ENCODE measurements at regions of chr11 and their contacts with region 1.

Region 1: DNA sequence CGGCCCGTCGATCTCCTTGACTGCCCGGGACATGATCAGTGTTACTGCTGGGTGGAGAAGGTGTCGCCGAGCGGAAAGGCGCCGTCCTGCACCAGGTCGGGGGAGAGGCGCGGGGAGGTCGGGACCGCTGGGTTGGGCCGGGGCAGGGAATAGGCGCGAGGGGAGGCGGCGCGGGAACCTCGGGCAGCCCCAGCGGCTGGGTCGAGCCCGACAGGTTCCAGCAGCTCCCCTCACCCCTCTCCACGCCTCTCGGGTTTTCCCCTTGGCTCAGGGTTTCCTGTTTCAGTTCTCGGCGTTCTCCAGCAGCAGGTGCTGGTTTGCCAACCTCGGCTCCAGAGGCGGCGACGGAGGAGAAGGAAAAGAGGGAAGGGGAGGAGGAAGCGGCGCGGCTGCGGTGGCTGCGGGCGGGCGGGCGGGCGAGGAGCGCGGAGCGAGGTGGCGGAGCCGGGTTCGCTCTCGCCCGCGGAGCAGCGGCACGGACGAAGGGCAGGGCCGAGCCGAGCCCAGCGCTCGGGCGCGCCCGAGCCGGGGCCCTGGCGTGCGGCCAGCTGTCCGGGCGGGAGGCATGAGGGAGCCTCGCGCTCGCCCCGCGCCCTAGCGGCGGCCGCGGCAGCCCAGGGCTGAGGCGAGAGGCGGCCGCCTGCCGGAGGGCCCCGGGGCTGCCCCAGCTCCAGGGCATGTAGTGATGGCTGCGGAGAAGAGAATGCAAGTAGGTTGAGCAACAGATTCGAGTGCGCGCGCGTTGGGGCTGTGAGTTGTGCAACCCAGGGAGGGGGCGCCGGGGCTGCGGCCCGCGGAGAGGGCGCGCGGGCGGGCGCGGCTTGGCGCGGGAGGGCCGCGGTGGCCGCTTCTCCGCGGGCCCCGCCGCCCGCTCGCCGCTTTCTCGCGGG is at the start of gene ZC3H12C:
- DNase-seq: peak; percentile 16 to 91
- H3K4me3 ChIP-seq: peak within 1 kb of the TSS; percentile 85 to 90
- H3K27ac ChIP-seq: peak within 1 kb of the TSS; percentile 99 to 100
- H3K4me1 ChIP-seq: peaks cover 0 to 15% of the 10 kb centered on the region in 2 donors
- H3K27me3 ChIP-seq: no peaks in the 10 kb centered on the region
- CTCF ChIP-seq: peak; percentile 28 to 81 (median 32)
- total RNA-seq, gene ZC3H12C: 6.3 TPM

Region 2: GRCh38 chr11:108222686-108223448 is 1869.9 kb before region 1 on chr11 and contains the start of gene ATM:
- intact Hi-C with region 1: loop called (anchors 10 kb)
- DNase-seq: peak; percentile 97 to 99
- H3K4me3 ChIP-seq: peak within 1 kb of the TSS; percentile 80 to 85
- H3K27ac ChIP-seq: peak within 1 kb of the TSS; percentile 92 to 97
- H3K4me1 ChIP-seq: peaks cover 0 to 13% of the 10 kb centered on the region in 2 donors
- H3K27me3 ChIP-seq: no peaks in the 10 kb centered on the region
- CTCF ChIP-seq: peak; percentile 56 to 76 (median 74)
- total RNA-seq, gene ATM: 16.0 TPM

Region 3: GRCh38 chr11:109933126-109933525 is 159.6 kb before region 1 on chr11:
- intact Hi-C with region 1: no loop called
- DNase-seq: no peak
- H3K4me3 ChIP-seq: no peak overlapping the region
- H3K27ac ChIP-seq: no peak overlapping the region
- H3K4me1 ChIP-seq: no peaks in the 10 kb centered on the region
- H3K27me3 ChIP-seq: no peaks in the 10 kb centered on the region
- CTCF ChIP-seq: no peak

Region 4: DNA sequence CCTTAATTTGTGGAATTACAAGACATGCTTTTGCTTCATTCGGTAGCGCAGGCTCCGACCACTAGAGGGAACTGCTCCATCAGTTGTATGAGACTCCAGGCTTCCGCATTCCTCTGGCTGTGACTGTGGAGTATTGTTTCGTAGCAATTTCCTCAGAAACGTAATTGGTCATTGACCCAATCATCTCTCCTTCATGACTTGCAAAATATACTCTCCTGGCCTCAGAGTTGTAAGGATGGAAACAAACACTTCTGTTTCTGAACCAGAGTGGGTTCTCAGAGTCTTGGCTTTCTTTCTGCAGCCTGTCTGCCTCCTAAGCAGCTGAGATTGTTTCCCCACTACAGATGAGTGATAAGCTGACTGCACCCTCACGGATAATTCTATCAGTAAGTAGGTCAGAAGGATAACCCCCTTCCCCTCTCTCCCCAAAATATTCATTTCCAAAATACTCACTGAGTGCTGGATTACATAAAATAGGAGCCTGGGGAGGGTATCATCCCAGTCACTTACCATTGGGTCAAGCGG is 146.4 kb before region 1 on chr11:
- intact Hi-C with region 1: loop called (anchors 1 kb)
- DNase-seq: peak; percentile 60 to 95
- H3K4me3 ChIP-seq: peak overlapping the region; percentile 40 to 51
- H3K27ac ChIP-seq: peak overlapping the region; percentile 47 to 78
- H3K4me1 ChIP-seq: no peaks in the 10 kb centered on the region
- H3K27me3 ChIP-seq: no peaks in the 10 kb centered on the region
- CTCF ChIP-seq: peak; percentile 85 to 94 (median 91)

Region 5: GRCh38 chr11:110296226-110297075 is 203.7 kb after region 1 on chr11 and contains the start of gene RDX:
- intact Hi-C with region 1: loop called (anchors 5 kb)
- DNase-seq: peak in 1 of 2 donors; percentile 82
- H3K4me3 ChIP-seq: peak within 1 kb of the TSS; percentile 83 to 95
- H3K27ac ChIP-seq: peak within 1 kb of the TSS; percentile 87 to 95
- H3K4me1 ChIP-seq: peaks cover 5 to 18% of the 10 kb centered on the region in 2 donors
- H3K27me3 ChIP-seq: no peaks in the 10 kb centered on the region
- CTCF ChIP-seq: peak in 1 of 3 experiments; percentile 17
- total RNA-seq, gene RDX: 105 TPM

Region 6: GRCh38 chr11:110429731-110430266 is 337.0 kb after region 1 on chr11 and contains the start of gene FDX1:
- intact Hi-C with region 1: loop called (anchors 2 kb)
- DNase-seq: peak; percentile 22 to 89
- H3K4me3 ChIP-seq: peak within 1 kb of the TSS; percentile 95 to 98
- H3K27ac ChIP-seq: peak within 1 kb of the TSS; percentile 87 to 96
- H3K4me1 ChIP-seq: peaks cover 0 to 17% of the 10 kb centered on the region in 2 donors
- H3K27me3 ChIP-seq: no peaks in the 10 kb centered on the region
- CTCF ChIP-seq: peak; percentile 31 to 81 (median 54)
- total RNA-seq, gene FDX1: 17.6 TPM

Measured in ascending aorta (tissue), 2 donors.